ENCODE measurements at regions of chr1 and their contacts with region 1.

Region 1: DNA sequence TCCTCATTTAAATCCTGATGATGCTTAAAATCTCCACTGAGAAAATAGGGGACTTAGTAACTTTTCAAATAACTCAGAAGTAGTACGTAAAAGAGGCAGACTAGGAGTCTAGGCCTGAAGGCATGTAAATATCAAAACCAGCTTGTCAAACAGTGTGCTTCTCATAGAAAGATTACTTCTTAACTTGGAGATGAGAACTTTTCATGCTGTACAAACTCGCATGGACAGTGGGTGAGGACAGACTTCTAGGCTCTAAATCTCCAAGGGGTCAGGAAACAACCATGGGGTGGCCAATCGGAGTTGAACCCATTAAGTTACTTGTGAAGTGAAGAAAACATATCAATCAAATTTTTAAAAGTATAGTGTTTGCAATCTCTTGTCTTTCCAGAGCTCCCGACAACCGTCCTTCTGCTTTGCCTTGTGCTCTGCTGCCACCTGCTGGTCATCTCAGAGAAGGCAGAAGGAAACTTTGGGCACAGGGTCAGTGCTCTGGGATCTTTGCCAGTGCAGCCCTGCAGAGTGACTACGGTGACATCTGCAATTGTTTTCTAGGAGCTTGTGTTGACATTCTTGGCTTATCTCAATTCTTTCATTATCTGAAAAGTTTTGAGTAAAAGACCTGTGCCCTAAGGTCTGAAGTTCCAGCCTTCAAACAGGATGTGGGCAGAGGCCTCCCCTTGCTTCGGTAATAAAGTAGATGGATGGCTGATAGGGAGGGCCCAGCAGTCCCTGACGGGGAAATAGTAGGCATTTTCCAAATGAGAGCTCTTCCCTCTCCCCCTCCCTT is 105.1 kb upstream of the PDE4B start:
- DNase-seq: peak; percentile 76 to 94
- H3K4me3 ChIP-seq: no peak overlapping the region
- H3K27ac ChIP-seq: no peak overlapping the region
- H3K4me1 ChIP-seq: 0 out of 2 replicates have a peak, but pooled peaks cover 4% of the 10 kb centered on the region
- H3K27me3 ChIP-seq: no peaks in the 10 kb centered on the region
- CTCF ChIP-seq: peak; percentile 89

Region 2: DNA sequence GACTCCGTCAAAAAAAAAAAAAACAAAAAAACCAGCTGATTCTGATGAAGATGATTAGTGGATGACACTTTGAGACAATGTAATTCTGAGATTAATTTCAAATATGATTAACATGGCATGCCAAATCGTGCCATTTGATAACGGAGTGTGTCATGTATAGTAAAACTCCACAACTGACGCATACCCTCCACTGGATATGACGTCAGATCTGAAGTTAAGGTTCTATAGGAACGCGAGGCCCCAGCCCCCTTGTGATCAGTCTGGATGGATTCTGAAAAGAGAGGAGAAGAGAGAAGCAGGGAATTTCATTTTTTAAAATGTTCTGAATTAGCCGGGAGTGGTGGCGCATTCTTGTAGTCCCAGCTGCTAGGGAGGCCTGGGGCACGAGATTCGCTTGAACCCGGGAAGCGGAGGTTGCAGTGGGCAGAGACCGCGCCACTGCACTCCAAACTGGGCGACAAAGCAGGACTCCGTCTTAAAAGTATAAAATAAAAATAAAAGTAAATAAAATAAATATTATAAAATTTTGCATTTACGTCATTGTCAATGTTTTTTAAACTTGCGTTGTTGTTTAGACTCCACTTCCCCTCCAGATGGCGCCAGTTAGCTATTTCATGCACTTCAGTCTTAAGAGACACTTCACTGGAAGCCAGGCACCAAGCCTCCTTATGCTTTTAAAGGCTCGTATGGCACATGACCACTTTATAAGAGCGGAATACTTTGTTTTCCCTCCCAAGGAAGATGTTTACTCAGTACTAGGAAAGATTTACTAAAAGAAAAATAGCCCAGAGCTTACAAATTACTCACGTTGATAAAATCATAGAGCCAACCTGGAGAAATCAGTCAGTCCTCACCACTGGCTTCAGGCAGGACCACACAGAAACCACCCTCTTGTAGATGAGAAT is 1418.7 kb before region 1 on chr1:
- CTCF ChIA-PET with region 1: no interaction called
- POLR2A ChIA-PET with region 1: no interaction called
- intact Hi-C with region 1: loop called (anchors 2 kb)
- DNase-seq: peak; percentile 63 to 68
- H3K4me3 ChIP-seq: no peak overlapping the region
- H3K27ac ChIP-seq: no peak overlapping the region
- H3K4me1 ChIP-seq: 0 out of 2 replicates have a peak, but pooled peaks cover 6% of the 10 kb centered on the region
- H3K27me3 ChIP-seq: no peaks in the 10 kb centered on the region
- CTCF ChIP-seq: peak; percentile 94

Region 3: GRCh38 chr1:64823691-64824476 is 863.7 kb before region 1 on chr1:
- CTCF ChIA-PET with region 1: no interaction called
- POLR2A ChIA-PET with region 1: no interaction called
- intact Hi-C with region 1: loop called (anchors 5 kb)
- DNase-seq: peak; percentile 47 to 60
- H3K4me3 ChIP-seq: no peak overlapping the region
- H3K27ac ChIP-seq: no peak overlapping the region
- H3K4me1 ChIP-seq: no peaks in the 10 kb centered on the region
- H3K27me3 ChIP-seq: no peaks in the 10 kb centered on the region
- CTCF ChIP-seq: peak; percentile 91

Region 4: DNA sequence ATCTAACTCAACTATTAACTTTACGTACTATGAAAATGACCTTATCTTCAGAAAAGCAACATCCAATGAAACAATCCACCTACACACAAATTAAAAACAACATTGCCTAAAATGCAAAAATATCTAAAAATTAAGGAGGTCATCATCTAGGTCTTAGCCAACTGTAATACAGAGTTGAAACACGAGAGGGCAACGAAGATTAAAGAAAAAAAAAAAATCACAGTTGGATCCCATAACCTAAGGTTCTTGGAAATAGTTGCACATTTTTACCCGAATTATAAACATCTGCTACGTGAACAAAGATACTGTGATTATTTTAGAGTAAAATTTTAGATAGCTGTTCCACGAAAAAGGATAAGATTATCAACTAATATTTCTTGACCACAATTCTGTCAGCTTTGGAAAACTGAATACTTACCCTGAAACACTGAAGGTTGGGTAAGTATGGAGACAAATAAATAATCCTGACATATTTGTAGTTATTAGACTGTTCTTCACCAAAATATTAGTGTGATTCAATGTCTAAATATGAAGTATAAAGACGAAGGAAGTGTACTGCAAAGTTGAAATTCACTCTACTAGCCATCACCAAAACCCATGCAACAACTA is 627.6 kb before region 1 on chr1:
- CTCF ChIA-PET with region 1: interaction called, 4 read pairs
- POLR2A ChIA-PET with region 1: no interaction called
- intact Hi-C with region 1: loop called (anchors 1 kb)
- DNase-seq: peak in 1 of 2 experiments; percentile 48
- H3K4me3 ChIP-seq: no peak overlapping the region
- H3K27ac ChIP-seq: no peak overlapping the region
- H3K4me1 ChIP-seq: no peaks in the 10 kb centered on the region
- H3K27me3 ChIP-seq: no peaks in the 10 kb centered on the region
- CTCF ChIP-seq: peak; percentile 78

Region 5: DNA sequence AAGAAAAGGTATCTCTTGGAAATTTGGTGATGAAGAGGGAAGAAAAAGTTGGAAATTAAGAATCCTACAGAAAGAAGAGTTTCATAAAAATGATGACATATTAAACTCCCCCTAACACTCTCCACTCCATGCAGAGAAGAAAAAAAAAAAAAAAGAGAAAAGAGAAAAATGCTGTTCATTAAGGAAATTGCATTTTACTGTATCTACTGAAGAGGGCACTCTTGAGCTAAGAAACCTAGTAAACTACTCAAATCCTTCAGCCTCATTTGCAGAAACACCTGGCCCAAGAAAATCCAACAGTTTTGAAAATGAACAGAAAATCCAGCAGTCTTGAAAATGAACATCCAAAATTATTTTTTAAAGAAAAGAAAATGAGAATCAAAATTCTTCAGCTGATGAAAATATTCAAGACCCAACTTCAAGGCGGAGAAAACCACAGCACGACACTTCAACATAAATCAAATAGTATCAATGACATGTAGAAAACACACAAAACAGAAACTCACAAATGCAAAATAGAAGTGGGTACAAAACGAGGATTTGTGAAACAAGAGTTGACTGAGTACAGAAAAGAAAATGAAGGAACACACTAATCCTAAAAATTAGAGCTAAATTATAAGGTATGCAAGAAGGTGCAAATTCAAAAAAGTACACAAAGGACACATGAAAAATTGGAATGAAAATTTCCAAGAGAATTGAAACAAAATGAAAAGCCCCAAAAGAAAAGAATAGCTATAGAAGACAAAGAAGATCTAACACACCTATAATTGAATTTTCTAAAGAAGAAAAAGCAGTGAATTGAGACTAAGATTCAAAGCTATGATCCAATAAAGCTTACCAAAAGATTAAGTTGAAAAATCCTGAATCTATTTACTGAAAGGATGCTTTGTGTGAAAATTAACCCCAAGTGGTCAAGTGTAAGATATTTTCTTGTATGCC is 451.5 kb before region 1 on chr1:
- CTCF ChIA-PET with region 1: interaction called, 13 read pairs
- POLR2A ChIA-PET with region 1: no interaction called
- intact Hi-C with region 1: loop called (anchors 1 kb)
- DNase-seq: no peak
- H3K4me3 ChIP-seq: no peak overlapping the region
- H3K27ac ChIP-seq: no peak overlapping the region
- H3K4me1 ChIP-seq: no peaks in the 10 kb centered on the region
- H3K27me3 ChIP-seq: no peaks in the 10 kb centered on the region
- CTCF ChIP-seq: peak; percentile 87

Region 6: DNA sequence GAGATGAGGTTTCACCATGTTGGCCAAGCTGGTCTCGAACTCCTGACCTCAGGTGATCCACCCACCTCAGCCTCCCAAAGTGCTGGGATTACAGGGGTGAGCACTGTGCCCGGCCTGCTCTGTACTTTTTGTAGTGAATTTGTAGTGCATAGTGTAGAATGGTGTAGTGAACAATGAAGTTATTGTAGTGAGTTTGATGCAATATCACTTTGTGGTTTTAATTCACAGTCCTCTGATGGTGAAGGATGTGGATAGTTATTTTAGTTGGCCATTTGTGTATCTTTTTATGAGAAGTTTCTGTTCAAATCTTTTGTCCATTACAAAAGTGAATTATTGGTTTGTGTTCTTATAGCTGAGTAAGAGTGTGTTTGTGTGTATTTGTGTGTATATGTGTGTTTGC is 162.7 kb after region 1 on chr1:
- CTCF ChIA-PET with region 1: no interaction called
- POLR2A ChIA-PET with region 1: no interaction called
- intact Hi-C with region 1: no loop called
- DNase-seq: no peak
- H3K4me3 ChIP-seq: no peak overlapping the region
- H3K27ac ChIP-seq: no peak overlapping the region
- H3K4me1 ChIP-seq: no peaks in the 10 kb centered on the region
- H3K27me3 ChIP-seq: no peaks in the 10 kb centered on the region
- CTCF ChIP-seq: no peak

Region 7: DNA sequence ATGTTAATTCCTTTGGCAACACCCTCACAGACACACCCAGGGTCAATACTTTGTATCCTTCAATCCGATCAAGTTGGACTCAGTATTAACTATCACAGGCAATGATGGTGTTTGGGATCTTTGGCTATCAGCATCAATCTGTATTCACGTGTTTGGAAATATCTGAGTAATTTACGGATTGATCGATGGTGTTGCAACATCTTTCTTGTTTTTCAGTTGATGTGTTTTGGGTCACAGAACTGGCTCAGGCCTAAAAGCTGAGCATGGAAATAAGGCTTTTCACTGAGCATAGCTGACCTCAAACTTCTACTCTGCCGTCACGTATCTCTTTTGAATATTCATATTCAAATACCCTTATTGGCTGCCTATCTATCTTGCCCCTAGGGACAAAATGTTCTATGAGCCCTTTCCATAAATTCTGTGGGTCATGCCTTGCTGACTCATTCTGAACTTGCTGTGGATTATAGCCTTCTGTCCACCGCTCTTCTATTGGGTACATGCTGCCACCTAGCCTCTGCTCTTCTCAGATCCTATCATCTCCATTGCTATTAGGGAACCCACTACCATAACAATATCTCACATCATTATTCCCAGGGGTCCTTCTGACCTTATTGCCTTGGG is 261.1 kb after region 1 on chr1:
- CTCF ChIA-PET with region 1: no interaction called
- POLR2A ChIA-PET with region 1: no interaction called
- intact Hi-C with region 1: loop called (anchors 5 kb)
- DNase-seq: no peak
- H3K4me3 ChIP-seq: no peak overlapping the region
- H3K27ac ChIP-seq: no peak overlapping the region
- H3K4me1 ChIP-seq: no peaks in the 10 kb centered on the region
- H3K27me3 ChIP-seq: no peaks in the 10 kb centered on the region
- CTCF ChIP-seq: no peak

Region 8: DNA sequence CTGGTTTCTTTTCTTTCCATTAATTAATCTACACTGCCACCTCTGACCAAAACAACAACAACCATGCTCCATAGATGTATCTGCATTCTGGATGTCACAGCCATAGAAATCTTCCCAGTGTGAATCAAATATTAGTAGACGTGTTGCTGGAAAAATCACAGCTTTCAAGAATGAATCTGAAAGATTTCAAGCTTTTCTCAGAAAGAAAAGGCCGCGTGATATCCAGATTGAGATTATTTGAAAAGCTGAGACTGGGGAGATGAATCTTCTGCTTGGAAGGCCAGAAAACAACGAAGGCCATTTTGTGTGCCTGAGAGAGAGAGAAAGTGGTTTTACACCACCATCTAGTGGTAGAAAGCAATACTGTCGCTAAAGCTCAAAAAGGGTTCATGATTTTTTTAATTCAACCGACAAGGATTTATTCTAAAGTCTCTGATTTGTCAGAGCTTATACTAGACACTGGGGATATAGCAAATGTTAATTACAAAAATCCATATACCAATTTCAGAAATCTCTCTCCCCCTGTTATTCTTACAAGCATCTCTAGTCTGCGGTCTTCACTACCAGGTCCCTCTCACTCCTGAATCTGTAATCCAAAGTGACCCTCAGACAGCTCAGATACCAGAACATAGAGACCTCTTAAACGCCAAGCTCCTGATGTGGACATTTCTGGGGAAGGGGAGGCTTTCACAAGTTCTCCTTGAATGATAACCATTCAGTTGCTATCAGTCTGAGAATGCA is 758.8 kb after region 1 on chr1:
- CTCF ChIA-PET with region 1: no interaction called
- POLR2A ChIA-PET with region 1: no interaction called
- intact Hi-C with region 1: loop called (anchors 10 kb)
- DNase-seq: peak; percentile 24 to 36
- H3K4me3 ChIP-seq: no peak overlapping the region
- H3K27ac ChIP-seq: no peak overlapping the region
- H3K4me1 ChIP-seq: no peaks in the 10 kb centered on the region
- H3K27me3 ChIP-seq: no peaks in the 10 kb centered on the region
- CTCF ChIP-seq: peak; percentile 86

Measured in PC-9 (cell line).